Activated T-helper 1 cell treated with anti-CD3 and anti-CD28 coated beads, Interleukin-12 subunit alpha, Interleukin-12 subunit beta, Interleukin-2, Interleukin-4 antibody, amounts not matched to agents 30 ng/mL and 10 ng/mL and 1 ng/mL, durations not matched to agents 14 hours and 24 hours and 36 hours (primary cell): ENCODE measurements at regions of chr10 and their contacts with region 1.

Region 1: GRCh38 chr10:97292097-97292862 is at the start of gene ARHGAP19:
- DNase-seq: peak; percentile 92
- H3K4me3 Mint-ChIP-seq: peak within 1 kb of the TSS; percentile 91
- H3K27ac Mint-ChIP-seq: peak within 1 kb of the TSS; percentile 92
- H3K4me1 Mint-ChIP-seq: peaks cover 22% of the 10 kb centered on the region
- H3K27me3 Mint-ChIP-seq: peaks cover 3% of the 10 kb centered on the region
- total RNA-seq, gene ARHGAP19: 27.1 and 27.8 TPM in 2 replicates

Region 2: GRCh38 chr10:97278491-97278989 is 13.7 kb before region 1 on chr10:
- intact Hi-C with region 1: loop called (anchors 2 kb)
- DNase-seq: no peak
- H3K4me3 Mint-ChIP-seq: no peak overlapping the region
- H3K27ac Mint-ChIP-seq: no peak overlapping the region
- H3K4me1 Mint-ChIP-seq: peaks cover 12% of the 10 kb centered on the region
- H3K27me3 Mint-ChIP-seq: no peaks in the 10 kb centered on the region

Region 3: GRCh38 chr10:97318772-97319651 is 26.7 kb after region 1 on chr10 and contains the start of gene FRAT1:
- intact Hi-C with region 1: loop called (anchors 1 kb)
- DNase-seq: peak; percentile 86
- H3K4me3 Mint-ChIP-seq: peak within 1 kb of the TSS; percentile 87
- H3K27ac Mint-ChIP-seq: peak within 1 kb of the TSS; percentile 97
- H3K4me1 Mint-ChIP-seq: peaks cover 26% of the 10 kb centered on the region
- H3K27me3 Mint-ChIP-seq: peaks cover 24% of the 10 kb centered on the region
- total RNA-seq, gene FRAT1: 3.0 and 3.3 TPM in 2 replicates